Activated naive CD4-positive, alpha-beta T cell treated with anti-CD3 and anti-CD28 coated beads, Interleukin-2, amount 10 ng/mL, durations not matched to agents 7 days and 5 days (primary cell): ENCODE measurements at regions of chrX and their contacts with region 1.

Region 1: DNA sequence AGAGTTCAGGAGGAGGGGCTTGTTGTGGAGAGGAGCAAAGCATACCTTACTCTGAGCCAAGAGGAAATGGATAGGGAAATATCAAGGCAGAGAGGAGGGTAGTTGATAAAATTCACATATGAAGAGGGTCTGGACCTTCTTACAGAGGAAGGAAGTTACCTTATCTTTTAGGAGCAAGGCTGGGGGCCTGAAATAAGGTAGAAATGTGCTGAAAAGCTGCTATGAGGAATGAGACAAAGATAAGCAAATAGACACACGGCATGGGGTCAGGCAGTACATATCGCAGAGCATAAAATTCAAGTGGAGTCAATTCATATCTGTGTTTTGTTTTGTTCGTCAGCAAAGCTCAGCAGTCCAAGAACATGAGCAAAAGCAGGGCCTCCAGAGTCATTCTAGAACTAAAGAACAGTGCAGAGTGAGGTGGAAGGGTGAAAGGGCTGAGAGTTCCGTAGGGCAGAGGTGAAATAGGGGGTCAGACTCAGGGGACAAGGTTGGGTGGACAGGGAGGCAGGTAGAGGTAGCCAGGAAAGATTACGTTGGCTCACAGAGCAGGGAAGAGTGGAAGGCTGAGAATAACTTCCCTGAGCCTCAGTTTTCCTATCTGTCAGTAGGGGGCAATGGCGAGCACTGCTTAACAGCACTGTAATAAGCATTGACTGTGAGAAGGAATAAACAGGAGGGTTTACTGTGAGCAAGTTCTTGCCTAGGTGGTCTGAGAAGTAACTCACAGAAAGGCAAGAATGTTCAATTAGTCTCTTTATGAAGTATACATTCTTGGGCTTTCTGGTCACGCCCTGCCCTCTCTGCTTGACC is 9.2 kb downstream of the VSIG4 start:
- DNase-seq: peak; percentile 33
- H3K4me3 Mint-ChIP-seq: no peak overlapping the region
- H3K27ac Mint-ChIP-seq: no peak overlapping the region
- H3K4me1 Mint-ChIP-seq: peaks cover 11% of the 10 kb centered on the region
- H3K27me3 Mint-ChIP-seq: no peaks in the 10 kb centered on the region

Region 2: GRCh38 chrX:66015900-66016689 is 14.6 kb before region 1 on chrX:
- CTCF ChIA-PET with region 1: interaction called, 13 read pairs
- DNase-seq: no peak
- H3K4me3 Mint-ChIP-seq: peak overlapping the region; percentile 47
- H3K27ac Mint-ChIP-seq: peak overlapping the region; percentile 89
- H3K4me1 Mint-ChIP-seq: peaks cover 97% of the 10 kb centered on the region
- H3K27me3 Mint-ChIP-seq: no peaks in the 10 kb centered on the region